CD14-positive monocyte (primary cell): ENCODE measurements at regions of chr12 and their contacts with region 1.

Region 1: GRCh38 chr12:4412465-4412864 is 33.0 kb upstream of the FGF23 start:
- DNase-seq: no peak
- H3K4me3 ChIP-seq: no peak overlapping the region
- H3K4me3 Mint-ChIP-seq: no peak overlapping the region
- H3K27ac ChIP-seq: no peak overlapping the region
- H3K27ac Mint-ChIP-seq: no peak overlapping the region
- H3K4me1 ChIP-seq: no peaks in the 10 kb centered on the region
- H3K4me1 Mint-ChIP-seq: peaks cover 7% of the 10 kb centered on the region
- H3K27me3 ChIP-seq: peaks cover 7 to 22% of the 10 kb centered on the region in 2 donors
- H3K27me3 Mint-ChIP-seq: peaks cover 15 to 33% (median 16%) of the 10 kb centered on the region in 3 donors
- CTCF ChIP-seq: no peak

Region 2: GRCh38 chr12:4386801-4387200 is 25.7 kb before region 1 on chr12:
- intact Hi-C with region 1: loop called in 1 of 2 experiments (anchors 2 kb)
- DNase-seq: no peak
- H3K4me3 ChIP-seq: no peak overlapping the region
- H3K4me3 Mint-ChIP-seq: no peak overlapping the region
- H3K27ac ChIP-seq: no peak overlapping the region
- H3K27ac Mint-ChIP-seq: no peak overlapping the region
- H3K4me1 ChIP-seq: no peaks in the 10 kb centered on the region
- H3K4me1 Mint-ChIP-seq: no peaks in the 10 kb centered on the region
- H3K27me3 ChIP-seq: peaks cover 0 to under 1% of the 10 kb centered on the region in 2 donors
- H3K27me3 Mint-ChIP-seq: peaks cover 3 to 11% (median 6%) of the 10 kb centered on the region in 3 donors
- CTCF ChIP-seq: no peak